CD14-positive monocyte (primary cell): ENCODE measurements at regions of chr7 and their contacts with region 1.

Region 1: GRCh38 chr7:105876091-105876963 is at the start of gene ATXN7L1:
- DNase-seq: peak; percentile 89 to 96 (median 96)
- H3K4me3 ChIP-seq: peak within 1 kb of the TSS; percentile 63 to 98 (median 94)
- H3K4me3 Mint-ChIP-seq: peak within 1 kb of the TSS; percentile 96 to 100
- H3K27ac ChIP-seq: peak within 1 kb of the TSS; percentile 51 to 92
- H3K27ac Mint-ChIP-seq: peak within 1 kb of the TSS; percentile 95 to 98 (median 97)
- H3K4me1 ChIP-seq: peaks cover 18 to 20% of the 10 kb centered on the region in 2 donors
- H3K4me1 Mint-ChIP-seq: peaks cover 34% of the 10 kb centered on the region
- H3K27me3 ChIP-seq: peaks cover 17 to 28% of the 10 kb centered on the region in 2 donors
- H3K27me3 Mint-ChIP-seq: peaks cover 22 to 29% (median 26%) of the 10 kb centered on the region in 3 donors
- CTCF ChIP-seq: peak; percentile 52
- polyA plus RNA-seq, gene ATXN7L1: 4.5 to 12.2 (median 11.2) TPM

Region 2: DNA sequence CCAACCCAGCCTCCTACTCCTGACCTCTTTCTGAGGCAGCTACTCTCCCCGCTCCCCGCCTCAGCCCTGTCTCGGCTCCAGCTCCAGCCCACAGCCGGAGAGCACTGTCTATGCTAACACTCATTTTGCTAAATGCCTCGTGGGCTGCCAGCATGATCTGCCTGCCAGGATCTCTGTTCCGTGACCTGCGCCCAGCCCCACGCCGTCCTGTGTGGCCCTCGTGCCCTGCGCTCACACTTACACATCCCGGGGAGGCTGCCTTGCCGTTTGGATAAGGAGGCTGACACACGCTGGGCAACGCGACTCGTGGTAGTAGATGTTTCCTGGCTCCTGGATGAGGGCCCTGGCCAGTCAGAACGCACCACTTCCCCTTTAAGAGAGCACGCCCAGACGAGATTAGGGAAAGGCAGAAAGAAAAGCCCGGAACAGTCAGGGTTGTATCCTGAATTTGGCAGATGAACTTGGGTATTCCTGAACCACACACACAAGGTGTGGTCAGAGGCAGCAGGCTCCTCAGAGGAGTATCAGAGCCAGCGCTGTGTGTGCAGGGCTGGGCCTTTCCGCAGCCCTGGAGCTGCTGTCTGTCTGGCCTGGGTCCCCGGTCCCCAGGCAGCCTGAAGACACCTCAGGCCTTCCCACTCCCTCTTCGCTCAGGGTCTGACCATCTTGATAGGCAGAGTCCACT is 197.4 kb before region 1 on chr7:
- intact Hi-C with region 1: loop called in 1 of 2 experiments (anchors 10 kb)
- DNase-seq: peak; percentile 70 to 84 (median 80)
- H3K4me3 ChIP-seq: peak overlapping the region; percentile 62 to 90 (median 72)
- H3K4me3 Mint-ChIP-seq: peak overlapping the region; percentile 95 to 98
- H3K27ac ChIP-seq: peak overlapping the region; percentile 85 to 96
- H3K27ac Mint-ChIP-seq: peak overlapping the region; percentile 94 to 98 (median 95)
- H3K4me1 ChIP-seq: peaks cover 61 to 73% of the 10 kb centered on the region in 2 donors
- H3K4me1 Mint-ChIP-seq: peaks cover 81% of the 10 kb centered on the region
- H3K27me3 ChIP-seq: no peaks in the 10 kb centered on the region
- H3K27me3 Mint-ChIP-seq: no peaks in the 10 kb centered on the region
- CTCF ChIP-seq: no peak

Region 3: DNA sequence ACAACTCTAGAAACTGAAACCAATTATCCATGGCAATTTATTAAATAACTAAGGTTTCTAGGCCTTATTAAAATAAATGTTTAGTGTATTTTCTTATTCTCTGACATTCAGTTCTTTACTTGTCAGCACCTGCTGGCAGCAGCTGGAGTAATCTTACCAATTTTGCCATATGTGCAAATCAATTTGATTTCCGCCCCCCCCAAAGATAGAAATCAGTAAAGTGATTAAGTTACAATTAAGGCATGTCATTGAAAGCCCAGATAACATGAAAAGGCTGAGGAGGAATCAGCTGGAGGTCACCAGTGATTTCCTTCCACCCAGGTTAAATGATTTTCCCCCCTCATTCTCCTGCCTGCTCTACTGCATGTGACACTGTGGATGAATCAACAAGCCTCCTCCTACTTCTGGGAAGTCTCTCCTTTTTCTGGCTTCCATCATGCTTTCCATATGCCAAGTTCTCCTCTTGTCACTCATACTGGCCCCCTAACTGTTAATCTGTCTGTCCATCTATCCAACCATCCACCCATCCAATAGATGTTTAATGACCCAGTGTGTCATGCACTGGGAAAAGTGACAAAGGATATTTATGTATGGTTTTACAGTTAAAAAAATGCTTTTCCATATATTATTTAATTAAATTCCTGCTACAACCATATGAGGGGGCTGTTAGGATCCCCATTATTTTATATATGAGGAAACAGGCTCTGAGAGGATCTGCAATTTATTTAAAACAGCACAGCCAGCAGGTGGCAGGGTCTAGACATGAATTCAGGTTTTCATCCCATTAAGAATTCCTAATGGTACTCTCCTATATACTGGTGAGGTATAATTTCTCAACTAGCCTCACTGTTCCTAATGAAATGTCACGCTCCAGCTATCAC is 116.4 kb before region 1 on chr7:
- intact Hi-C with region 1: loop called in 1 of 2 experiments (anchors 10 kb)
- DNase-seq: peak in 2 of 3 donors; percentile 20 to 28
- H3K4me3 ChIP-seq: no peak overlapping the region
- H3K4me3 Mint-ChIP-seq: no peak overlapping the region
- H3K27ac ChIP-seq: no peak overlapping the region
- H3K27ac Mint-ChIP-seq: no peak overlapping the region
- H3K4me1 ChIP-seq: no peaks in the 10 kb centered on the region
- H3K4me1 Mint-ChIP-seq: no peaks in the 10 kb centered on the region
- H3K27me3 ChIP-seq: no peaks in the 10 kb centered on the region
- H3K27me3 Mint-ChIP-seq: peaks cover 0 to 2% (median 0%) of the 10 kb centered on the region in 3 donors
- CTCF ChIP-seq: peak; percentile 74

Region 4: GRCh38 chr7:105808703-105809590 is 67.4 kb before region 1 on chr7:
- intact Hi-C with region 1: loop called (anchors 5 to 10 kb)
- DNase-seq: peak; percentile 87 to 95 (median 89)
- H3K4me3 ChIP-seq: no peak overlapping the region
- H3K4me3 Mint-ChIP-seq: no peak overlapping the region
- H3K27ac ChIP-seq: peak overlapping the region; percentile 19 to 75
- H3K27ac Mint-ChIP-seq: peak overlapping the region; percentile 55 to 92 (median 85)
- H3K4me1 ChIP-seq: peaks cover 30 to 38% of the 10 kb centered on the region in 2 donors
- H3K4me1 Mint-ChIP-seq: peaks cover 53% of the 10 kb centered on the region
- H3K27me3 ChIP-seq: no peaks in the 10 kb centered on the region
- H3K27me3 Mint-ChIP-seq: peaks cover 0 to 3% (median 0%) of the 10 kb centered on the region in 3 donors
- CTCF ChIP-seq: no peak

Region 5: DNA sequence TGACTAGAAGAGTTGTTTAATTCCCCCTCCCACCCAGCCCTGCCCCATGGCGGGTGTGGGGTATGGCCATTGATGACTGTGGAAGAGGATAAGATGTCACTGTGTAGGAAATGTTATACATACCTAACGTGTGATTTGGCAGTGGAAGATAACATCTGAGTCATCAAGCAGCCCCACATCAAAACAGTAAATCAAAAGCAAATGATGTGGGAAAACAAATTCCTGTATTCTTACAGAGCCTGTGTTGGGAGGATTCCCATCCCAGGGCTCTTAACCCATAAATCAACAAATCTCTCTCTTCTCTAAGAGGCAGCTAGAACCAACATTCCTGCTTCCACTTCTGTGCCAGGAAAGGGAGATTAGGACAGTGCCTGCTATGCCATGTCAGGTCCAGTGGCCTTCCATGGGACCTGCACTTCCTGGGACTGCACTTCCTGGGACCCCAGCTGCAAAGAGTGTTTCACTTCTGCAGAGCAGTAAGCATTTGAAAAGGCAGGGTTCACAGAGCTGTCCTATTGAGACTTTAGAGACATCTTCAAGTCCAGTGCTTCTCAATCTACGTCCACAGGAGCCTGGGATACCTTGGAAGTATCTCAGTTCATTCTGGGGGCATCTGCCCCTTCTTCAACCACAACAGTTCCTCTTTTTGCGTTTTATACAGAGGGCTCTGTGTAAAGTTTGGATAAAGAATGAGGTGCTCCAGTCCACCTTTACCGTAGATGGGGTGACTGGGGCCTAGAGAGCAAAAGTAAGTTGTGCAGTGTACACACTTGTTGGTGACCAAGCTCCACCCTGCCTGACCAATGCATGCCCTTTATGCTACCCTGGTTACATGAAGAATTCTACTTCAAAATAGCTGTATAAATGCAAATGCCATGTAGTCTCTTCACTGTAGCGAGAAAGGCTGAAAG is 45.7 kb before region 1 on chr7:
- intact Hi-C with region 1: no loop called
- DNase-seq: no peak
- H3K4me3 ChIP-seq: no peak overlapping the region
- H3K4me3 Mint-ChIP-seq: no peak overlapping the region
- H3K27ac ChIP-seq: no peak overlapping the region
- H3K27ac Mint-ChIP-seq: peak overlapping the region in 1 of 7 donors; percentile 20
- H3K4me1 ChIP-seq: peaks cover 0 to 2% of the 10 kb centered on the region in 2 donors
- H3K4me1 Mint-ChIP-seq: peaks cover 7% of the 10 kb centered on the region
- H3K27me3 ChIP-seq: no peaks in the 10 kb centered on the region
- H3K27me3 Mint-ChIP-seq: peaks cover 0 to 2% (median 0%) of the 10 kb centered on the region in 3 donors
- CTCF ChIP-seq: no peak

Region 6: DNA sequence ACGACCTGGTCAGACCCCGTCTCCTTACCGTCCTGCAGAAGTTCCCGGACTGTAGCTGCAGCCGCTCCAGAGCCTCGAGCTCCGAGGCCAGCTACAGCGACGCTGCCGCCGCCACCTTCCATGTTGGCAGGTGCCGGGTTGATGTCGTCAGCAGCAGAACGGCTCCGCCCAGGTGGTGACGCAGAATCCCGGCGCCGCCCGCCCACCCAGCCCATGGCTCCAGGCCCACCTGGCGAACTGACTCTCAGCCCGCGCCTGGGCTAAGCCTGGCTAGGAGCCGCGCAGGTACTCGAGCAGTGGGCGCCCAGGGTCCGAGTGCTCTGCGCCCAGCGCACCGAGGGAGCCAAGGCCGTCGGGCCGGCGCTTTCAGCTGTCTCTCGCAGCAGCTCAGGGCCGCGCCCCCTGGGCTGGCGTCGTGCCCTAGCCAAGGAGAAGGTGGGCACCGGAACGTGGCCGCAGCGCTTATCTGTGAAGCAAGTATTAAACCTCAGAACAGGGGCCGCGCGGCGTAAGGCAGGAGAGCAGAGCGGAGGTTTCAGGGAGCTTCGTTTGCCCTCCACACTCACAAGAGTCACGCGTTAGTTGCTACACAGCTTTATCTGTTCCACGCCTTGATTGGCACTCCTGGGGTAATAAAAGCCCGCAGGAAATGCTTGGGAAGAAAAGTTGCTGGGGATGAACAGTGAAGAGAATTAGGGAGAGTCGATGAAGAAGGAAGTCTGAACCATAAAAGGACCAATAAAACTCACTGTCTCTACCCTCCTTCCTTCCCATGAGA is 1687.6 kb after region 1 on chr7 and contains the starts of genes COG5 and DUS4L:
- intact Hi-C with region 1: loop called in 1 of 2 experiments (anchors 10 kb)
- DNase-seq: peak; percentile 73 to 79 (median 78)
- H3K4me3 ChIP-seq: peak within 1 kb of the TSS; percentile 88 to 99 (median 93)
- H3K4me3 Mint-ChIP-seq: peak within 1 kb of the TSS; percentile 89 to 91
- H3K27ac ChIP-seq: peak within 1 kb of the TSS; percentile 84 to 98
- H3K27ac Mint-ChIP-seq: peak within 1 kb of the TSS; percentile 91 to 98 (median 95)
- H3K4me1 ChIP-seq: peaks cover 25 to 38% of the 10 kb centered on the region in 2 donors
- H3K4me1 Mint-ChIP-seq: peaks cover 41% of the 10 kb centered on the region
- H3K27me3 ChIP-seq: no peaks in the 10 kb centered on the region
- H3K27me3 Mint-ChIP-seq: no peaks in the 10 kb centered on the region
- CTCF ChIP-seq: no peak
- polyA plus RNA-seq, gene COG5: 12.7 to 29.0 (median 28.1) TPM
- polyA plus RNA-seq, gene DUS4L: 1.6 to 2.3 (median 1.7) TPM